Endothelial cell of umbilical vein (primary cell): ENCODE measurements at regions of chr7 and their contacts with region 1.

Region 1: GRCh38 chr7:99219985-99220384 is 12.1 kb upstream of the KPNA7 start:
- DNase-seq: no peak
- H3K4me3 ChIP-seq: no peak overlapping the region
- H3K27ac ChIP-seq: no peak overlapping the region
- H3K4me1 ChIP-seq: no peaks in the 10 kb centered on the region
- H3K27me3 ChIP-seq: no peaks in the 10 kb centered on the region
- CTCF ChIP-seq: no peak
- POLR2A ChIP-seq: no peak

Region 2: GRCh38 chr7:99167072-99167471 is 52.9 kb before region 1 on chr7:
- CTCF ChIA-PET with region 1: interaction called, 3 read pairs
- POLR2A ChIA-PET with region 1: no interaction called
- dilution Hi-C with region 1: no loop called
- intact Hi-C with region 1: loop called (anchors 10 kb)
- DNase-seq: no peak
- H3K4me3 ChIP-seq: no peak overlapping the region
- H3K27ac ChIP-seq: no peak overlapping the region
- H3K4me1 ChIP-seq: no peaks in the 10 kb centered on the region
- H3K27me3 ChIP-seq: peaks cover 0 to 5% of the 10 kb centered on the region in 2 experiments
- CTCF ChIP-seq: no peak
- POLR2A ChIP-seq: no peak